ENCODE measurements at regions of chr5 and their contacts with region 1.

Region 1: DNA sequence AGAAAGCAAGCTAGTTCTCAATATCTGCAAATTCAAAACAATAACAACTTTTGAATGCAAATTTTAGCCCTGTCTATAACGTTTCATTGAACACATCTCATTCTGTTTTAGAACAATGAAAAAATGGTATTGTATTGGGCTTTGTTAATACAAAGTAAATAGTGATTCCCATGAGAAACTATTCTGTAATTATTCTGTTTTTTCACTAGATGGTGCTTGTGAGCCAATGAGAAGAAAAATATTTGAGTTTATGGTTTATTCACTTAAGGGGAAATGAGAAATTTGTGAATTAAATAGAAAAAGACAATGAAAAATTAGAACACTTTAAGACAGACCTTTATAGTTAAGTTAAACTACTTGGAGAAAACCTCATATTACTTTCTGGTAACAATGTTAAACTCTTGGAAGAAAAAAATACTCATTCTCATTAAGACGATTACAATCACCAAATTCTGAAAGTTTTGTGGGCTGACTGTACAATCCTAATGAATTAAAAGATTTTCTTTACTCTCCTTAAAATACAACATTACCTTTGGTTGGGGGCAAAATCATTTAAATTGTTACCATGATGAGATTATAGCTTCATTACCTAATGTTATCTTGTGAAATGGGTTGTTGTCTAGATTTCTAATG is 127.0 kb downstream of the NNT start:
- DNase-seq: no peak
- H3K4me3 ChIP-seq: no peak overlapping the region
- H3K27ac ChIP-seq: no peak overlapping the region
- H3K4me1 ChIP-seq: no peaks in the 10 kb centered on the region
- H3K27me3 ChIP-seq: no peaks in the 10 kb centered on the region
- CTCF ChIP-seq: peak; percentile 72

Region 2: DNA sequence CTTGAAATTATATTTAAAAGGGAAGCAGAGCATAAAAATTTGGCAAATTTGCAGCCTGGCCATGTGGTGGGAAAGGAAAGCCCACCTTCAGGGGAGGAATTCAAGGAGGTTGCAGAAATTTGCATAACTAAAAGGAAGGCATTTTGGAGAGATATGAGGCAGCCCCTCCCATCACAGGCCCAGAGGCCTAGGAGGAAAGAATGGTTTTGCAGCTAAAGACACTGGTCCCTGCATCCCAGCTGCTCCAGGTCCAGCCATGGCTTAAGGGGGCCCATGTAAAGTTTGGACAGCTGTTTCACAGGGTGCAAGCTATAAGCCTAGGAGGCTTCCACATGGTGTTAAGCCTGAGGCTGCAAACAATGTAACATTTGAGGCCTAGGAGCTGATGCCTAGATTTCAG is 85.5 kb after region 1 on chr5:
- intact Hi-C with region 1: no loop called
- DNase-seq: no peak
- H3K4me3 ChIP-seq: no peak overlapping the region
- H3K27ac ChIP-seq: no peak overlapping the region
- H3K4me1 ChIP-seq: no peaks in the 10 kb centered on the region
- H3K27me3 ChIP-seq: no peaks in the 10 kb centered on the region
- CTCF ChIP-seq: no peak

Region 3: GRCh38 chr5:44332285-44332971 is 602.5 kb after region 1 on chr5:
- intact Hi-C with region 1: loop called (anchors 2 kb)
- DNase-seq: no peak
- H3K4me3 ChIP-seq: no peak overlapping the region
- H3K27ac ChIP-seq: no peak overlapping the region
- H3K4me1 ChIP-seq: peaks cover 4% of the 10 kb centered on the region
- H3K27me3 ChIP-seq: no peaks in the 10 kb centered on the region
- CTCF ChIP-seq: peak; percentile 71

Region 4: DNA sequence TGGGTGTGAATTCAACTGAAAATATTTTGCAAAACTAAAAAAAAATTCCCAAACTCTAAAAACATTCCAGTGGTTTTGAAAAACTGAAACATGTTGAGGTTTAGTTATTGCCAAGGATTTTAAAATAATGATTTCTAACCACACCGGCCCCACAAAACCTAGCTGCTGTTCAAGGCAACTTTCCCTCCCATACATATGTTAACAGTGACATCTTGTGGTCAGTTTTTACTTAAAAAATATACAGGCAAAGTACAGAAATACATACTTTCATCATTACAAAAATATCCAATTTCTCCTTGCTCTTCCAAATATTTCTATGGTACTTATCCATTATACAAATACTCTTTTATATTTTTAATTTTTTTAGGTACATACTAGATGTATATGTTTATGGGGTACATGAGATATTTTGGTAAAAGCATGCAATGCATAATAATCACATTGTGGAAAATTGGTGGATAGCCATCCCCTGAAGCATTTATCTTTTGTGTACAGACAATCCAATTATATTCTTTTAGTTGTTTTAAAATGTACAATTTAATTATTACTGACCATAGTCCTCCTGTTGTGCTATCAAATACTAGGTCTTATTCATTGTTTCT is 1044.4 kb after region 1 on chr5:
- intact Hi-C with region 1: loop called (anchors 10 kb)
- DNase-seq: no peak
- H3K4me3 ChIP-seq: no peak overlapping the region
- H3K27ac ChIP-seq: no peak overlapping the region
- H3K4me1 ChIP-seq: no peaks in the 10 kb centered on the region
- H3K27me3 ChIP-seq: no peaks in the 10 kb centered on the region
- CTCF ChIP-seq: peak; percentile 64

Measured in left ventricle myocardium inferior (tissue), 1 donor.